ENCODE measurements at regions of chr1 and their contacts with region 1.

Region 1: GRCh38 chr1:220294846-220295301 is 22.6 kb upstream of the RAB3GAP2 start:
- H3K4me3 ChIP-seq: no peak overlapping the region
- H3K27ac ChIP-seq: no peak overlapping the region
- H3K4me1 ChIP-seq: no peaks in the 10 kb centered on the region
- CTCF ChIP-seq: no peak

Region 2: DNA sequence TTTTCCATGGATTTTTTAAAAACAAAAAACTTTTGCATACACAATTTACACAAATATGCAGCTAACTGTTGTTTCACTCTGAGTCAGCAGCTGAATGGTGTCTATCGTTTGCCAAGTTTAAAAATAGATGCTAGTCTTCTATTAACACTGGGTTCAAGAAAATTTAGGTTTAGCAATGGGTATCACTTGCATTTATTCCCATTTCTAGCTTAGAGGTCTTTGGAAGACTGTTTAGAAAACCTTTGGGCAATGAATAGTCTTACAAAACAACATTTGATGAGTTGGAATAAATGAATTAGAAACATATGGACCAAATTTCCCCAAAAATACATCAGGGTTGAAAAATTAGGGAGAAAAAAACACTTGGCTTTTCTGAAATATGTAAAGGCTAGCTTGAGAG is 955.4 kb before region 1 on chr1:
- CTCF ChIA-PET with region 1: no interaction called
- POLR2A ChIA-PET with region 1: no interaction called
- H3K4me3 ChIP-seq: no peak overlapping the region
- H3K27ac ChIP-seq: no peak overlapping the region
- H3K4me1 ChIP-seq: no peaks in the 10 kb centered on the region
- CTCF ChIP-seq: no peak

Region 3: GRCh38 chr1:220099826-220100225 is 195.0 kb before region 1 on chr1:
- CTCF ChIA-PET with region 1: no interaction called
- POLR2A ChIA-PET with region 1: no interaction called
- H3K4me3 ChIP-seq: no peak overlapping the region
- H3K27ac ChIP-seq: no peak overlapping the region
- H3K4me1 ChIP-seq: no peaks in the 10 kb centered on the region
- CTCF ChIP-seq: no peak

Region 4: DNA sequence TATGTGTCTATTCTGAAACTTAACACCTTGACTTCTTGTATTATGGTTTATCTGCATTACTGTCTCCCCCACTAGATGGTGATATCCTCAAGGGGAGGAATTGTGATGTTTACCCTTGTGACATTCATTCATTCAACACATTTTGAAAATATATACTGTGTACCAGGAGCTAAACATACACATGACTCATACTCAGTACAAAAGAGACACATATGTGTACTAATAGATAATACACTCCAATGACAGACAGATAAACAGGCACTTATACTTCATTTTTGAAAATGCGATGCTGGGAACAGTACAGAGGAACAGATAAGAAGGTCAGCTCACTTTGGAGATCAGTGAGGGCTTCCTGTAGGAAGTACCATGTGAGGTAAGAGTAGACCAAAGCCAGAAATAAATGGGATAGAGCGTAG is 13.7 kb before region 1 on chr1:
- CTCF ChIA-PET with region 1: interaction called, 23 read pairs
- POLR2A ChIA-PET with region 1: no interaction called
- H3K4me3 ChIP-seq: no peak overlapping the region
- H3K27ac ChIP-seq: no peak overlapping the region
- H3K4me1 ChIP-seq: no peaks in the 10 kb centered on the region
- CTCF ChIP-seq: peak; percentile 74

Measured in HEK293 (cell line).